PC-3 (cell line): ENCODE measurements at regions of chrX and their contacts with region 1.

Region 1: GRCh38 chrX:39772057-39772832 is 325.5 kb downstream of the BCOR start:
- DNase-seq: peak; percentile 75
- ATAC-seq: peak; percentile 89
- H3K4me3 ChIP-seq: no peak overlapping the region
- H3K27ac ChIP-seq: no peak overlapping the region
- H3K4me1 ChIP-seq: peaks cover 16% of the 10 kb centered on the region; the same call in 1 of the 2 replicates
- H3K27me3 ChIP-seq: no peaks in the 10 kb centered on the region
- CTCF ChIP-seq: no peak

Region 2: GRCh38 chrX:39808471-39808917 is 36.2 kb after region 1 on chrX:
- CTCF ChIA-PET with region 1: no interaction called
- POLR2A ChIA-PET with region 1: no interaction called
- intact Hi-C with region 1: loop called (anchors 5 kb)
- DNase-seq: peak; percentile 32
- ATAC-seq: no peak
- H3K4me3 ChIP-seq: no peak overlapping the region
- H3K27ac ChIP-seq: peak overlapping the region; percentile 48
- H3K4me1 ChIP-seq: peaks cover 24% of the 10 kb centered on the region
- H3K27me3 ChIP-seq: no peaks in the 10 kb centered on the region
- CTCF ChIP-seq: no peak